ENCODE measurements at regions of chr4 and their contacts with region 1.

Region 1: GRCh38 chr4:111641955-111642579 is 503.2 kb upstream of the FAM241A start:
- DNase-seq: peak; percentile 44
- ATAC-seq: peak; percentile 76 to 89

Region 2: GRCh38 chr4:111798840-111799239 is 156.8 kb after region 1 on chr4:
- intact Hi-C with region 1: no loop called
- DNase-seq: no peak
- ATAC-seq: no peak

Region 3: DNA sequence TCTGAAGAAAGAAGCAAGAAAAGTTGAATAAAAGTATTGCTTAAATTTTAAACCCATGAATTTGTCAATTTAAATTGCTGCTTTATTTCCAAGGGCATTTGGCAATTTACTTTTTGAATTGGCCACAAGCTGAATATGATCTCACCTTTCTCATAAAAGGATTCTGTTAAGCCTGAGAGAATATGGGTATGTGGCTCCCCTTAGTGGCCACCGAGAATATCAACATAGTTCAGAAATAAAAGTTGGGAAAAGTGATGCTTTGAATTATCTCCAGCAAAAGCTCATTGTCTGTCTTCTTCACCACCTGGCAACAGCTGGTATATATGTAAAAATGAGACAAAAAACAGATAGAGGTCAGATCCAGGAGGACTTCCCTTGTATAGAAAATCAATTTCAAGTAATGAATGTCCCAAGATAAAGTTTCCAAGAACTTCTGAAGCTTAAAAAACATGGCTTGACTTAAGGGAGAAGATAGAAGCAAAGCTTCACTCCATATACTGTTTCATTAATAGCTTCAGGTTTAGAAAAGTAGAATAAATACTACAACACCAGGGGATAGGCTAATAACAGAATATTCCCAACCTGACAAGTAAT is 212.5 kb after region 1 on chr4:
- intact Hi-C with region 1: loop called in 1 of 2 experiments (anchors 5 kb)
- DNase-seq: no peak
- ATAC-seq: peak in 1 of 2 donors; percentile 36

Region 4: DNA sequence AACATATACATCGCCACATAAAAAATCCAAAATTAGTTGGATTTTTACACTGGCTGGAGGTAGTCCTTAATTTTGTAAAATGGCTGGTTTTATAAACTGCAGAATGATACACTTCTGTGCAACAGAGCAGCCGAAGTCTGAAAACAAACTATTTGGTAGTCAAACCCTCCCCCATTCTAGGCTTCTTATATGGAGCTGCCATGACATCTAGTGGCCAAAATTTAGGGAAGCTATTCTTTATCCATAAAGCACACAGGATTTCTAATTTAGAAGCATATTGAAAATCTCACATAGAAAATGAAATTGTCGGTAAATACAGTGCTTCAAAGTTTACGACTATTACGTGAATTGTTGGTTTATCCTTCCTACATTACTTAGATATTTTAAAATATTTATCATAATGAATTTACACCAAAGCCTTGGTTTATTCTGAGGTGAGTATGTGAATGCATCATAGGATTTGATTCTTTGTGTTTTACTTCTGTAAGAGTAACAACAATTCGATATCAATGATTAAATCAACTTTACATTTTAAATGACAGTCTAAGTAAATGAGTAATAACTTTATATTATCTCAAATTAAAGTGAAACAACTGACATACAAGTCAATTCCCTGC is 389.8 kb after region 1 on chr4:
- intact Hi-C with region 1: loop called (anchors 2 to 10 kb)
- DNase-seq: no peak
- ATAC-seq: peak; percentile 55 to 61

Measured in left cardiac atrium (tissue), 4 donors.